Uterus (tissue), 4 donors: ENCODE measurements at regions of chr3 and their contacts with region 1.

Region 1: DNA sequence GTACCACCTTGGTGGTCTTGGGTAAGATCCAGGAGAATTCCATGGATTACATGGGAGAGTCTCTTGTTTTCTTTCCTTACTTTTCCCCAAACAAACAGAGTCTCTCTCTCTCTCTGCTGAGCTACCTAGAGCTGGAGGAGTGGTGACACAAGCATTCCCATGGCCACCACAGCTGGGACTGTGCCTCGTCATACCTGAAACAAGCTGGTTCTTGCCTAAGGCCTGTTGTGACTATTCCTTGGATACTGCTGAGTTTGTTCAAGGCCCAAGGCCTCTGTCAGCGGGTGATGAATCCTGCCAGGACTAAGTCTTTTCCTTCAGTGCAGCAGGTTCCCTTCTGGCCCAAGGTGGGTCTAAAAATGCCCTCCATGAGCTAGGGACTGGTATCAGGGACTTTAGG is 378.1 kb upstream of the ZNF385D start:
- DNase-seq: no peak
- H3K4me3 ChIP-seq: no peak overlapping the region
- H3K27ac ChIP-seq: no peak overlapping the region
- H3K4me1 ChIP-seq: no peaks in the 10 kb centered on the region
- H3K27me3 ChIP-seq: no peaks in the 10 kb centered on the region
- CTCF ChIP-seq: no peak
- POLR2A ChIP-seq: no peak

Region 2: GRCh38 chr3:22199095-22199494 is 70.0 kb after region 1 on chr3:
- intact Hi-C with region 1: loop called (anchors 5 kb)
- DNase-seq: no peak
- H3K4me3 ChIP-seq: no peak overlapping the region
- H3K27ac ChIP-seq: no peak overlapping the region
- H3K4me1 ChIP-seq: no peaks in the 10 kb centered on the region
- H3K27me3 ChIP-seq: no peaks in the 10 kb centered on the region
- CTCF ChIP-seq: no peak
- POLR2A ChIP-seq: no peak